Right cardiac atrium (tissue), 5 donors: ENCODE measurements at regions of chr10 and their contacts with region 1.

Region 1: DNA sequence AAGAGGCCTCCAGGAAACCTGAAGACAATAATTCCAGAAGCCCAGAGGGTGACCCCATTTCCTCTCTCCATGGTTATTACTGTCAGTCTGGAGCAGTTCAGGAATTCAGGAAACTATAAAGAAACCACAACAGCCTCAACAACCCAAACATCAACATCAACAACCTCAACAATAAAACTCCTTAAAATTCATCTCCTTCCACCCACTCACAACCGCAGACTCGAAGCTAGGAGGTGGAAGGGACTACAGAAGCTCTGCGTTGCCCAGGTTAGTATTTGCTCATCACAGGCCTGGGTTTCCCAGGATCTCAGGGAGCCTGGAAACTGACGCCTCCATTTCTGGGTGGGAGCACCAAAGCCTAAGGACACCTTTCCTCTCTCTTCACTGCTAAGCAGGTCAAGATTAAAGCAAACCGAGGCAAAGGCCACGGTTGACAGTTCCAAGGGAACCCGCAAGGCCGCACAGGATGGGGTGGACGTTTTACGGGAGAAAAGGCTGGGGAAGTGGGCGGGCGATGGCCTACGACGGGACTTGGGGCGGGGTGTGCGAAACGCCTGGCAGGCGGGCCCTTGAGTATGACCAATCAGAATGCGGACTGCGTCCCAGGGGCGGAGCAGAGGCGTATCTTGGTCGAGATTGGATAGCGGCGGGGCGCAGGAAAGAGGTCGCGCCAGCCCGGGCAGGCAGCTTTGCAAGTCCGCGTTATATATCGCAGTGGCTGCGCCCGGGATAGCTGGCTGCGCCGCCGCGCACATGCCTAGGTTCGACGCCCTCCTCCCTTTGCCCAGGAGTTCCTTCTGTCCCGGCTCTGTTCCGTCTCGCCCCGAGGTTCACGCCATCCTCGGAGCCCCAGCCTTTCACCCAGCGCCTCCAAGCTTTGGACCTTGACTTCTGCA is at the start of gene ELOVL3:
- DNase-seq: peak; percentile 96 to 98 (median 97)
- ATAC-seq: peak; percentile 97 to 98
- H3K4me3 ChIP-seq: peak within 1 kb of the TSS; percentile 37
- H3K27ac ChIP-seq: peak within 1 kb of the TSS; percentile 89
- H3K4me1 ChIP-seq: peaks cover 4% of the 10 kb centered on the region
- H3K27me3 ChIP-seq: no peaks in the 10 kb centered on the region
- total RNA-seq, gene ELOVL3: 0.17 to 0.56 (median 0.32) TPM

Region 2: GRCh38 chr10:102151774-102152544 is 73.9 kb before region 1 on chr10 and contains the start of gene NOLC1:
- intact Hi-C with region 1: loop called in 1 of 4 experiments (anchors 10 kb)
- DNase-seq: peak; percentile 99 to 100 (median 100)
- ATAC-seq: peak; percentile 98 to 99
- H3K4me3 ChIP-seq: peak within 1 kb of the TSS; percentile 84
- H3K27ac ChIP-seq: peak within 1 kb of the TSS; percentile 79
- H3K4me1 ChIP-seq: peaks cover 2% of the 10 kb centered on the region
- H3K27me3 ChIP-seq: no peaks in the 10 kb centered on the region
- total RNA-seq, gene NOLC1: 28.8 to 38.0 (median 31.7) TPM

Region 3: DNA sequence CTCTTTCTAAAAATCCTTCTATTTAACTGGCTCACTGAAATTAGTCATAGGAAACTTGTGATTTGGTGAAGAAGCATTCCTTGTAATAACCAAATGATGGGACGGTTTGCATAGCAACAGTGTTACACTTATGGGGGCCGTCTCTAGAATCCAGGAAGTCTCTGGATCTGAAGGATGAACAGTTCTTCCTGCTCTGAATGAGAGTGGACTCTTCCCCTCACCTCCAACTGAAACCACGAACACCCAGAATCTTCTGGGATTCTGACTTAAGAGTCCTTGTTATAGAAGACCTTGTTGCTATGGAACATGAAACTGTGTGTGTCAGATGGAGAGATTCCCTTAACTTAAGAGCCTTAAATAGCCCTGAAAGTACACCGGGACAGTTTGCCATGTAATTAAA is 50.5 kb before region 1 on chr10:
- intact Hi-C with region 1: loop called in 3 of 4 experiments (anchors 5 to 10 kb)
- DNase-seq: no peak
- ATAC-seq: no peak
- H3K4me3 ChIP-seq: no peak overlapping the region
- H3K27ac ChIP-seq: no peak overlapping the region
- H3K4me1 ChIP-seq: no peaks in the 10 kb centered on the region
- H3K27me3 ChIP-seq: no peaks in the 10 kb centered on the region

Region 4: GRCh38 chr10:102352066-102352715 is 126.3 kb after region 1 on chr10:
- intact Hi-C with region 1: loop called (anchors 2 to 5 kb)
- DNase-seq: peak; percentile 48 to 66 (median 55)
- ATAC-seq: peak; percentile 60 to 73
- H3K4me3 ChIP-seq: no peak overlapping the region
- H3K27ac ChIP-seq: no peak overlapping the region
- H3K4me1 ChIP-seq: no peaks in the 10 kb centered on the region
- H3K27me3 ChIP-seq: no peaks in the 10 kb centered on the region

Region 5: DNA sequence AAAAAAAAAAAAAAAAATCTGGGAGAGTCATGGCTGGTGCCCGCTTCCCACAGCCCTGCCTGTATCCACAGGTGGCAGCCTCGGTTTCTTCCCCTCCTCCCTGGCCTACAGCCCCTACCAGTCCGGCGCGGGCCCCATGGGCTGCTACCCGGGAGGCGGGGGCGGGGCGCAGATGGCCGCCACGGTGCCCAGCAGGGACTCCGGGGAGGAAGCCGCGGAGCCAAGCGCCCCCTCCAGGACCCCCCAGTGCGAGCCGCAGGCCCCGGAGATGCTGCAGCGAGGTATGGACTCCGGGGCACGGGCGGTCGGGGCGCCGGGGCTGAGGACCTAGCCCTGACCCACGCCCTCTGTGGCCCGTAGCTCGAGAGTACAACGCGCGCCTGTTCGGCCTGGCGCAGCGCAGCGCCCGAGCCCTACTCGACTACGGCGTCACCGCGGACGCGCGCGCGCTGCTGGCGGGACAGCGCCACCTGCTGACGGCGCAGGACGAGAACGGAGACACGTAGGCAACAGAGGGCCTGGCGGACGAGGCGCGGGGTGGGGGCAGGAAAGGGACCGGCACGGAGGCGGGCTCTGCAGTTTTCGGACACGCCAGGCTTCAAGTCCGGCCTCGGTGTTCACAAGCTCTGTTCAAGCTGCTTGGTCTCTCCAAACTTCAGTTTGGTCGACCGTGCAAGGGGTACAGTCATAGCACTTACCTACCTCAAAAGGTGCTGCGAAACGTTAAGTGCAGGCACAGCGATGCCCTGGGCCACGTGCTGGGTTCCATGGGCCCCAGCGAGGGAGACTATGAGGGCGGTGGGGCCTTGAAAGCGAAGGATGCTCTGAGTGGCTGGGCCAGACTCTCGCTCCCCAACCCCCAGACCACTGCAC is 173.6 kb after region 1 on chr10:
- intact Hi-C with region 1: loop called in 1 of 4 experiments (anchors 5 kb)
- DNase-seq: peak; percentile 91 to 97 (median 97)
- ATAC-seq: peak; percentile 75 to 79
- H3K4me3 ChIP-seq: peak overlapping the region; percentile 52
- H3K27ac ChIP-seq: peak overlapping the region; percentile 28
- H3K4me1 ChIP-seq: peaks cover 2% of the 10 kb centered on the region
- H3K27me3 ChIP-seq: no peaks in the 10 kb centered on the region